ENCODE measurements at regions of chr6 and their contacts with region 1.

Region 1: DNA sequence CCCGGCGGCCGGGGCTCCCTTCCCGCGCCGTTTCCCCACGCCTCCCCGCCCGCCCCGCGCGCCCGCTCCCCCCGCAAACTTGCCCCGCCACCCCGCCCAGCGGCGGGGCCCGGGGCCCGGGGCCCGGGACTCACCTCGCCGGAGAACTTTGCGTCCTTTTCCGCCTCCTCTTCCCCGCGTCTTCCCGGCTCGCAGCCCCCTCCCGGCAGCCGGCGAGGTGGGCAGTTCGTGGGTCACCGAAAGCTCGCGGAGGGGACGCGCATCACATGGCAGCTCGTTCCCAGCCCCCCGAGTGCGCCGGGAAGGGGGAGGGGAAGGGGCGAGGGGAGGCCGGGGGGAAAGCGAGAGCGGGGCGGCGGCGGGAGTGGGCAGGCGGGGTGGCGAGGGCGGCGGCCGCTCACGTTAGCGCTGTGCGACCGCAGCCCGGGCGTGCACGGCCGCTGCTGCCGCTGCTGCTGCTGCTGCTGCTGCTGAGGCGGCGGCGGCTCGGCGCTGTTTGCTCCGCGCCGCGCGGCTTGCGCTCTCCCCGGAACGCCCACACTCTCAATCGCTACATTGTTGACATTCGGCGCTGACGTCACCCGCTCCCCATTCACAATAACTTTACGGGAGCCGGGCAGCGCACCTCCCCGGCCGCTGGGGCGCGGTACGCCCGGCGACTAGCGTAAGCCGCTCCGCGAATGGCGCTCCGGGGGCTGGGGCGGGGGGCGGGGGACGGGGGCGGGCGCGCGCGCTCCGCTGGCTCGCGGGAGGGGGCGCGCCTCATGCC is at the start of gene BACH2:
- DNase-seq: peak; percentile 98
- H3K4me3 ChIP-seq: peak within 1 kb of the TSS; percentile 92
- H3K27ac ChIP-seq: peak within 1 kb of the TSS; percentile 82
- H3K4me1 ChIP-seq: peaks cover 64% of the 10 kb centered on the region
- CTCF ChIP-seq: no peak
- total RNA-seq, gene BACH2: 92.0 and 95.7 TPM in 2 replicates

Region 2: DNA sequence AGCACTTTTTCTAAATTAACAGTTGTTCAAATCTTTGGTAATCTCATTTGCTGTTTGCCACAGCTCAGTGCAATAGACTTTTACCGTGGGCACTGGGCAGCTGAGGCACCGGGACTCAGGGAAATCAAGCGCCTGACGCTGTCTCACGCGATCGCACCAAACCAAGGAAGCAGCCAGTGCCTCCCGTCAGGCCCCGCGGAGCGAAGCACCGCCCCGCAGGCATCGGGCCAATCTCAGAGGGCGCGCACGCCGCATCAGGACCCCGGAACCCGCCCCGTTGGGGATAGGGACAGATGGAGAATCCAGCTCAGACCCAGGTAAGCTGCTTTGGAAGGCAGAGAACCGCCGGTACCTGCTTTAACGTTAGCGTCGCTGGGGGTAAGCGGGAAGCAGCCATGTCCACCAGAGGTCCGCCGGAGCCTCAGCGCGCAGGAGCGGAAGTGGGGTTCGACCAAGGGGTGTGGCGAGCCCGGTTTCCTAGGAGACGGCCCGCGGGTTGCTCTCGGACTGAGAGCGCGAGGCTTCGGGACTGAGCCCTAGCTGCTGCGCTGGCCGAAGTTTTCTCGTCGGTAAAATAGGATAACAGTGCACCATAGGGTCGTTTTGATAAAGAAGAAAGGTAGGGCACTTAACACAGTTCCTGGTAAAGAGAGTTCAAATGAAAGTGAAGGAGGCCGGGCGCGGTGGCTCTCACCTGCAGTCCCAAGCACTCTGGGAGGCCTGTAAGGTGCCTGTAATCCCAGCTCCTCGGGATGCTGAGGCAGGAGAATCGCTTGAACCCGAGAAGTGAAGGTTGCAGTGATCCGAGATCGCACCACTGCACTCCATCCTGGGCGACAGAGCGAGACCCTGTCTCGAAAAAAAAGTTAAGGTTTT is 658.0 kb before region 1 on chr6 and contains the start of gene LYRM2:
- CTCF ChIA-PET with region 1: interaction called, 3 read pairs
- POLR2A ChIA-PET with region 1: no interaction called
- intact Hi-C with region 1: loop called (anchors 10 kb)
- DNase-seq: peak; percentile 93
- H3K4me3 ChIP-seq: peak within 1 kb of the TSS; percentile 81
- H3K27ac ChIP-seq: peak within 1 kb of the TSS; percentile 84
- H3K4me1 ChIP-seq: peaks cover 18% of the 10 kb centered on the region
- CTCF ChIP-seq: no peak
- total RNA-seq, gene LYRM2: 16.0 and 17.7 TPM in 2 replicates

Region 3: DNA sequence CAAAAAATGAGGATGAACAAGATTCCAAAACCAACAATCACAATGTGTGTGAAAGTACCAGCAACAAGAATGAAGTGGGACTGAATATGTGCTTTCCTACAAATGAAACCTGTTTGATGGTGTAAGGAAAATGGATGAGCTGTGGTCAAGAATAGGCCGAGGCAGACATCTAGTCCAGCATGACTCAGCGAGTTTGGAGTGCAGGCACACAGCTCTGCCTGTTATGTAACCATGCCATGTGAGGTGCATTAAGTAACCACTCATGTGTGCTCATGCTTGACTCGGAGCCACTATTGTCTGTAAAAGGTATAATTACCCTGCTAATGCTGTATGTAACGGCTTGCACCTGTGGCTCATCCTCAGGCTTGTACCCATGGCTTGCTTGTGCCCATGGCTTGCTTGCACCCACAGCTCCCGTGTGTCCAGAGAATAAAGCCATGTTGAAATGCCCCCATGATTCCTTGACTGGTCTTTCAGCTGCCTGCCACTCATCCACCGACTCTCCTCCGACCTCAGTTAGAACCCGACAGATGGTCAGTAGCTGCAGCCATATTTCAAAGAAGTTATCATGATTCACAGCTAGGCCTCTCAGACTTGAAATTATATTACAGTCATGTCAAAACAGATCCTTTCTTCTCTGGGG is 98.6 kb before region 1 on chr6:
- CTCF ChIA-PET with region 1: interaction called, 17 read pairs
- POLR2A ChIA-PET with region 1: no interaction called
- intact Hi-C with region 1: no loop called
- DNase-seq: peak; percentile 84
- H3K4me3 ChIP-seq: no peak overlapping the region
- H3K27ac ChIP-seq: no peak overlapping the region
- H3K4me1 ChIP-seq: peaks cover 2% of the 10 kb centered on the region
- CTCF ChIP-seq: no peak

Region 4: GRCh38 chr6:90319044-90319443 is 22.5 kb after region 1 on chr6:
- CTCF ChIA-PET with region 1: interaction called, 3 read pairs
- POLR2A ChIA-PET with region 1: interaction called, 11 read pairs
- intact Hi-C with region 1: loop called (anchors 2 kb)
- DNase-seq: no peak
- H3K4me3 ChIP-seq: no peak overlapping the region
- H3K27ac ChIP-seq: peak overlapping the region; percentile 31
- H3K4me1 ChIP-seq: peaks cover 77% of the 10 kb centered on the region
- CTCF ChIP-seq: no peak

Region 5: DNA sequence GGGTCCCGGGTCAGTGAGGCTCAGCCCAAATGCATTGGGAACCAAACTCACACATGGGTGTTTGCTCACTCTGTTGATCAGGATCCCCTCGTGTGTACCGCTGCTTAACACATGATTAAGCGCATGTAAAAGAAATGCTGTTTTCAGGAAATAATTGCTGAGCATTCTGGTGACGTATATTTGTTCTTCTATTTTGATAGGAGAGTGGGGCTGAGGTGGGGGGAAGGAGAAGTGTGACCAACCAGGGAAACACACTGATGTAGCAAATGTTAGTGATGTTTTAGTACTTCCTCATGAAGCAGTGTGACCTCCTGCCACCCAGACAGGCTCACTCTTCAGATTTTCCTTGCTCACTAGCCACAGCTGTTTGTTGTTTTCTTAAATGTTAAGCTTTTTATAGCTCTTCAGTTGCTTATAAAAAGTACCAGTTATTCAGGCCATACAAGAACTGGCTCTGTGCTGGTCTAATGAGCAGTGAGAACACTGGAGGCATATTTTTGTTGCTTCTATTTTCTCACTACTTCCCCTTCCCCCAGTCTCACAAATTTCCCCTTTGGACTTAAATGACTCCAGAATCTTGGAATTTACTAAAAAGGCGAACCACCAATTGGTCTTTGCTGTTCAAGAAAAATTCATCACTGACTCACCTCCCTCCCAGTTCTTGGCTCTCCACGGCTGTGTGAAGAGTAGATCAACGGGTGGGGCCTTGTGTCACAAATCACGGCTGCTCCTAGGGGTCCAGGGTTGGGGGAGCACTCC is 79.3 kb after region 1 on chr6:
- CTCF ChIA-PET with region 1: interaction called, 6 read pairs
- POLR2A ChIA-PET with region 1: interaction called, 71 read pairs
- intact Hi-C with region 1: loop called (anchors 1 kb)
- DNase-seq: peak; percentile 97
- H3K4me3 ChIP-seq: peak overlapping the region; percentile 68
- H3K27ac ChIP-seq: peak overlapping the region; percentile 100
- H3K4me1 ChIP-seq: peaks cover 98% of the 10 kb centered on the region
- CTCF ChIP-seq: no peak

Region 6: DNA sequence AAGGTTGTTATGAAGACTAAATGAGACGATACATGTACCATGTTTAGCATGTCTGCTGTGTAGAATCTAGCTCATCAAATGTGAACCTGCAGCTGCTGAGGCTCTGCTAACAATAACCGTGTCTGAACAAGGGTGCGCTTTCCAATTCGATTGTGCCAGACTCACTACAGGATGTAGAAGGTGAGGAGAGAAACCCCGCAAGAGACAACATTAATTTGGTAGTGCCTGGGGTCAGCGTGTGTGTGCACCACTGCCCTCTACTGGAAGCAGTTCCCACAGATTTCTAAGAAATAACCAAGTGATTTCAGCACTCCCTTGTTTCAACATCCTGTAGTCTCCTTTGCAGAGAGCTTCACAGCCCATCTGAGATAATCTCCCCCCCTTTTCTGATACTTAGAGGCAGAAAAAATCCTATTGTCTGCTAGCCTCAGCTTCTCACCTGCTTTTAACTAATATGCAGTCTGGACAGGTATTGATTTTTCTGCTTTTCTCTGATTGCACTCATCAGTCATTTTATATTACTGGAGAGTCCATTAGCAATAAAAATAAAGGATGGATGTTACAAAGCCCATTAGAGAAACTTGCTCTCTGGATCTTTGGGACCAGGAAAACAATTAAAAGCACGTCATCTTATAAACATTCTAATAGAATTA is 96.8 kb after region 1 on chr6:
- CTCF ChIA-PET with region 1: interaction called, 10 read pairs
- POLR2A ChIA-PET with region 1: interaction called, 31 read pairs
- intact Hi-C with region 1: loop called (anchors 1 kb)
- DNase-seq: peak; percentile 93
- H3K4me3 ChIP-seq: peak overlapping the region; percentile 18
- H3K27ac ChIP-seq: peak overlapping the region; percentile 71
- H3K4me1 ChIP-seq: peaks cover 67% of the 10 kb centered on the region
- CTCF ChIP-seq: peak; percentile 97